ENCODE measurements at regions of chr1 and their contacts with region 1.

Region 1: DNA sequence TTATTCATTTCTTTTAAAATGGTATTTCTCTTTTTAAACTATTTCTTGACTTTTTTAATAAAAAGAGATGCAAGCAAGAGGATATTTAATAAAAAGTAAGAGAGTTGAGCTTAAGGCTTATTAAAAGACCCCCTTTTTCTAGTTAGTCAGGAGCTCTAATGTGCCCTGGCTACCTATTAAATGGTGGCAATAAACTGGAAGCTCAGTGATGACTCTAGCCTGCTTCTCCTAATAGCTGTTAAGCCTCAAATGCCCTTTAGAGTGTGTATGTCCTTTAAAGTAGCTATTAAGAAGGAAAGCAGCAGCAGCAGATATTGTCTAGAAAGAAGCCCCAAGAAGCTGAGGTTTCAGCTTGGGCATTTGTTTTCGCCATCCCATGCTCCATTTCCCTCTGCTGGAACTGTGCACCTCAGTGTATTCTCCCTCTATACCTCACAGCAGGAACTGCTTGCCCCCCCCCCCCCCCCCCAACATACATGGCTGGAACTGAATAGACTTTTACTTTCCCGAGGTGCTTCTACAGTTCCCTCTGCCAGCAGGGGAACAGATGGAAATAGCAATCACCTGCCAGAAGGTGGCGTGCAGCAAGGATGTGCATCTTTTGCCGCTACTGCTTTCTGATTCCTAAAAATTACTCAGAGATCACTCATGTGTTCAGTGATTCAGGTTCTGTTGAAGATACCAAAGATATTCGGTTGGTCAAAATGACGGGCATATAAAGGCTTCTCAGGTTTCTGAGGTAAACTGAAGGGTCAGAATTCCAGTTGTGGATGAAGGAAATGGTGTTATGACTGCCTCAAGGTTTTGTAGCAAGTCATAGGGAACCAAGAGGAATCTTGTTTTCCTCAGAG is 2.5 kb downstream of the RGS4 start:
- H3K4me3 ChIP-seq: no peak overlapping the region
- H3K27ac ChIP-seq: no peak overlapping the region
- H3K4me1 ChIP-seq: no peaks in the 10 kb centered on the region
- CTCF ChIP-seq: peak; percentile 68; the same call in 1 of the 2 replicates

Region 2: DNA sequence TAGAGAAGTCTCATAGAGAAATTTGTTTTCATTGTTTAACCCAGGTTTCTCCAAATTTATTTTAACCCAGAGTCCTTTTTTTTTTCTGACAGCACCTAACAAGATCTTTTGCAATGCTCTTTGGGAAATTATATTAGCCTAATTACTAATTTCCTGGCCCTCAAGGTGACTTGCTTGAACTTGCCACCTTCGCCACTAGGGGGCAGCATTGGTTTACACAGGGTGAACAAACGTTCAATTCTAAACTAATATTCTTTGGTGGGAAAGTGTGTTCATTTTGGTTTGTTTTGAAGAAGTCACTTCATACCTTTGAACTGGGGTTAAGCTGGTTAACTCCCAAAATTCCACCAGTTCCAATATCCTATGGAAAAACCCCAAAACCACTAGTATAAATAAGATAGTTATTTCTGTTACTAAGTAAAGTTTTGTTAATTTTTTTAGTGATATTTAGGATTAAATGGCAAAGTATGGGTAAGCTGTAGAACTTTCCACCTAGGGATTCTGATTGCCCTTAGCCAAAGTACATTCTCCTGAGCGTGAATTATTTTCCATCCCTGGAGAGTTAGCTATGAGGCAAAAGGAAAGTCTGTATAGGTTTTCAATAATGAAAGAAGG is 223.7 kb before region 1 on chr1:
- CTCF ChIA-PET with region 1: interaction called, 39 read pairs
- POLR2A ChIA-PET with region 1: no interaction called
- H3K4me3 ChIP-seq: no peak overlapping the region
- H3K27ac ChIP-seq: no peak overlapping the region
- H3K4me1 ChIP-seq: peaks cover 6% of the 10 kb centered on the region
- CTCF ChIP-seq: peak; percentile 60

Region 3: GRCh38 chr1:162878000-162878596 is 193.5 kb before region 1 on chr1:
- CTCF ChIA-PET with region 1: interaction called, 37 read pairs
- POLR2A ChIA-PET with region 1: no interaction called
- H3K4me3 ChIP-seq: no peak overlapping the region
- H3K27ac ChIP-seq: no peak overlapping the region
- H3K4me1 ChIP-seq: no peaks in the 10 kb centered on the region
- CTCF ChIP-seq: peak; percentile 73

Region 4: DNA sequence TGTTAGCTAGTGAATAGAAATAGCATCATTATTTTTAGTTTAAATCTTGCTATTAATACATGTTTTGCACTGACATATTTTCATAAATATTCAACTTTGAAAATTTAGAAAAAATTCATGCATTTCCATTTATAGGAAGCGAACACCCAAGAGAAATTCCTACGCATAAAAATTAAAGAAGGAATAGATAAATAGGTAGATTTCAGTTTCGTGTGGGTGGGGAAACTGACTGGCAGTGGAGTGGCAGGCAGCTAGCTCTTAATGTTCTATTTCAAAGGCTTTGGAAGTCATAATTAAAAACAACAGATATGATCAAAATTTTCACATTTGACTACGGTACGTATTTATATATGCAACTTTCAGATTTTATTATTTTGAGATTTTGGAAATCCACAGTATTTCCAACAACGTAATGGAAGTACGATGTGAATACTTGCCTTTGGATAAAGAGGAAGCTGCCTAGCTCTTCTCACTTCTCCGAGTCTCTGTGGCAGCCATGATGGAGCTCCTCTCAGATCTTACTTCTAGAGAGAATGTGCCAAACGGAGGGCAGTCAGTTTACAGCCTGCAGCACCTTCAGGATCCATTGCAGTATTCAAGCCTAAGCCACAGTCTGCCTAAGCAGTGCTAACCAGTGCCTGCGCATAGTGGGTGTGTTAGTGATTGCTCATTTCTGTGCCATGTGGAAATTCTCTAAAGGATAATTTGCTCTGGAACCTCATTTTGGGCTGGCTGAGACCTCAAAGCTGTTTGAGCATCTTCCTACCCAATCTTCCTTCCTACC is 65.4 kb before region 1 on chr1:
- CTCF ChIA-PET with region 1: no interaction called
- POLR2A ChIA-PET with region 1: no interaction called
- H3K4me3 ChIP-seq: no peak overlapping the region
- H3K27ac ChIP-seq: no peak overlapping the region
- H3K4me1 ChIP-seq: no peaks in the 10 kb centered on the region
- CTCF ChIP-seq: no peak

Region 5: GRCh38 chr1:163060343-163061007 is 11.2 kb before region 1 on chr1:
- CTCF ChIA-PET with region 1: interaction called, 12 read pairs
- POLR2A ChIA-PET with region 1: interaction called, 3 read pairs
- H3K4me3 ChIP-seq: no peak overlapping the region
- H3K27ac ChIP-seq: no peak overlapping the region
- H3K4me1 ChIP-seq: no peaks in the 10 kb centered on the region
- CTCF ChIP-seq: no peak

Region 6: GRCh38 chr1:163174524-163175437 is 103.2 kb after region 1 on chr1:
- CTCF ChIA-PET with region 1: interaction called, 61 read pairs
- POLR2A ChIA-PET with region 1: no interaction called
- H3K4me3 ChIP-seq: no peak overlapping the region
- H3K27ac ChIP-seq: no peak overlapping the region
- H3K4me1 ChIP-seq: peaks cover 7% of the 10 kb centered on the region; the same call in 1 of the 2 replicates
- CTCF ChIP-seq: peak; percentile 62